CD4-positive, alpha-beta T cell (primary cell): ENCODE measurements at regions of chr6 and their contacts with region 1.

Region 1: DNA sequence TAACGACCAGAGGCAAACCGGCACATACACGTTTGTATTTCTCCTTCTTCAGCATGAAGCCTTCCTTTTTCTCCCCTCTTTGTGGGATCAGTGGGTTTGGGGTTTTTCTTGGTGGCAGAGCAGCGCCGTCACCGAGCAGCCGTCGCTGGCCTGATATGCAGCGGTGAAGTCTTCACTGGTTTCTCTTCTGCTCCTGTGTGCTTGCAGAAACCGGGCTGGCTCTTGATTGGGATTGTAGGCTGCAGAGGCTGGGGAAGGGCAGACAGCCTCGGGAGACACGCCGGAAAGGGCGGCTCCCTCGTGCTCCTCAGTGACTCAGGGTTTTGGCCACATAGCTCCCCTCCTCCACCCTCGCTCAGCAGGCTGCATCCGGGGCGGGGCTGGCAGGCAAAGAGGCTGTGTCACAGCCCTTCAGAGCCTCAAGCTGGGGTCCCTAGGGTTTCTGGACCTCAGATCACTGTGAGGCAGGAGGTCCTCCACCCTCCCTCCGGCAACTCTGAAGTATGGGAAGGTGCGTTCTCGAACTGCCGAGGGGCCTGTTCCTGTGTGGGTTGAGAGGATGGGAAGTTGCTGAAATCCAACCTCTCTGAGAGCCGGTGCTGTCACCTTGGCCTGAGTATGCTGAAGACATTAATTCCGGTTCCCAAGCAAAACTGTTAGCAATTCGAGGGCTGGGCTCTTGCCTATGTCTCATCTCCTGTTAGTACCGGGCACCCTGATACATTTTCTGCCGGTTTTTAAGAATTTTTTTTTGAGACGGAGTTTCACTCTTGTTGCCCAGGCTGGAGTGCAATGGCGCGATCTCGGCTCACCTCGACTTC is 24.2 kb downstream of the NQO2 start:
- DNase-seq: peak; percentile 58 to 93 (median 88)
- ATAC-seq: peak; percentile 82
- H3K4me3 ChIP-seq: peak overlapping the region; percentile 78
- H3K4me3 Mint-ChIP-seq: peak overlapping the region; percentile 86
- H3K27ac ChIP-seq: peak overlapping the region; percentile 40 to 76
- H3K27ac Mint-ChIP-seq: peak overlapping the region; percentile 77
- H3K4me1 ChIP-seq: peaks cover 68% of the 10 kb centered on the region
- H3K4me1 Mint-ChIP-seq: peaks cover 53% of the 10 kb centered on the region
- H3K27me3 ChIP-seq: no peaks in the 10 kb centered on the region
- H3K27me3 Mint-ChIP-seq: no peaks in the 10 kb centered on the region
- CTCF ChIP-seq: no peak

Region 2: GRCh38 chr6:2718334-2719092 is 305.4 kb before region 1 on chr6:
- CTCF ChIA-PET with region 1: no interaction called
- POLR2A ChIA-PET with region 1: no interaction called
- intact Hi-C with region 1: no loop called
- DNase-seq: no peak
- ATAC-seq: no peak
- H3K4me3 ChIP-seq: no peak overlapping the region
- H3K4me3 Mint-ChIP-seq: no peak overlapping the region
- H3K27ac ChIP-seq: no peak overlapping the region
- H3K27ac Mint-ChIP-seq: no peak overlapping the region
- H3K4me1 ChIP-seq: no peaks in the 10 kb centered on the region
- H3K4me1 Mint-ChIP-seq: peaks cover 10% of the 10 kb centered on the region
- H3K27me3 ChIP-seq: no peaks in the 10 kb centered on the region
- H3K27me3 Mint-ChIP-seq: no peaks in the 10 kb centered on the region
- CTCF ChIP-seq: no peak

Region 3: DNA sequence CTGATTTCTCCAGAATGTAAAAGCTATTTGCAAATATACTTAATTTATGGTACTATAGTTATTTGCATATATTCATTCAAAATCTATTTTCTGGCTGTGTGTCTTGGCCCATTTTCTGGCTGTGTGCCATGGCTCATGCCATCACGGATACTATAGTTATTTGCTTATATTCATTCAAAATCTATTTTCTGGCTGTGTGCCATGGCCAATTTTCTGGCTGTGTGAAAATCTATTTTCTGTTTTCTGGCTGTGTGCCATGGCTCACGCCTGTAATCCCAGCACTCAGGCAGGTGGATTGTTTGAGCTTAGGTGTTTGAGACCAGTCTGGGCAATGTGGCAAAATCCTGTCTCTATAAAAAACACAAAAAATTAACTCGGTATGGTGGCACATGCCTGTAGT is 15.5 kb after region 1 on chr6:
- CTCF ChIA-PET with region 1: no interaction called
- POLR2A ChIA-PET with region 1: interaction called, 17 read pairs
- intact Hi-C with region 1: no loop called
- DNase-seq: no peak
- ATAC-seq: no peak
- H3K4me3 ChIP-seq: no peak overlapping the region
- H3K4me3 Mint-ChIP-seq: no peak overlapping the region
- H3K27ac ChIP-seq: no peak overlapping the region
- H3K27ac Mint-ChIP-seq: no peak overlapping the region
- H3K4me1 ChIP-seq: no peaks in the 10 kb centered on the region
- H3K4me1 Mint-ChIP-seq: no peaks in the 10 kb centered on the region
- H3K27me3 ChIP-seq: no peaks in the 10 kb centered on the region
- H3K27me3 Mint-ChIP-seq: no peaks in the 10 kb centered on the region
- CTCF ChIP-seq: no peak

Region 4: DNA sequence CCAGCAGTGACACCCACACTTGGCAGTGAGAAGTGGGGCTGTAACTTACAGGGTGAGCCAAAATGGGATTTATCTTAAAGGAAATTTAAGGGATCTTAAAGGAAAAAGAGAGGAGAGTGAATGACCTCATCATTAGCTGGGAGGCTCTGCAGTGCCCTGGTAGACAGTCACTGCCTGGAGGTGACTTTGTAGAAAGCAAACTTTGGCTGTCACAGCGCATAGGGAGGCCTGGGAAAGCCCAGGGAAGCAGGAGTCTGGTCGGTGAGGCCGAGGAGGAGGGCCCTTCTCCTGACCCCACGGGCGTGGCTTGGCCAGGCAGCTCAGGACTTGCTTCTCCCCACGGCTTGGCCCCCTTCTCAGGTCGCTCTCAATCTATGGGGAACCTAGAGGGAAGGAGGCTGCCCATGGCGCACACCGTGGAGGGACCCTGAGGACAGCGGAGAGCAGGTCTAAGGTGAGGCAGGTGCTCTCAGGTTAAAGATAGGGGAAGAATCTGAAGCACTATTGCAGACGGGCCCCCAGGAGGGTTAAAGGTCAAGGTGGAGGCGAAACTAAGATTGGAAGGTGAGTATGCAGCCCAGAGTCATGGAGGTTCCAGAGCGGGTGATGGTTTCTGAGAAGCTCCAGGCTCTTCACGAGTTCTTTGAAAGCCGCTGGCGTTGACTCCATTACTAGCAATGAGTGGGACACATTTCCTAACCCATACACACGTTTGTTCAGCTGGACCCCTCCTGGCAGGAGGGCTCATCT is 28.8 kb after region 1 on chr6:
- CTCF ChIA-PET with region 1: interaction called, 5 read pairs
- POLR2A ChIA-PET with region 1: interaction called, 57 read pairs
- intact Hi-C with region 1: no loop called
- DNase-seq: no peak
- ATAC-seq: no peak
- H3K4me3 ChIP-seq: peak overlapping the region; percentile 64
- H3K4me3 Mint-ChIP-seq: peak overlapping the region; percentile 79
- H3K27ac ChIP-seq: no peak overlapping the region
- H3K27ac Mint-ChIP-seq: peak overlapping the region; percentile 58
- H3K4me1 ChIP-seq: peaks cover 21% of the 10 kb centered on the region
- H3K4me1 Mint-ChIP-seq: peaks cover 23% of the 10 kb centered on the region
- H3K27me3 ChIP-seq: no peaks in the 10 kb centered on the region
- H3K27me3 Mint-ChIP-seq: no peaks in the 10 kb centered on the region
- CTCF ChIP-seq: no peak